B cell (primary cell): ENCODE measurements at regions of chr5 and their contacts with region 1.

Region 1: GRCh38 chr5:65925601-65926275 is 637 bp upstream of the ERBIN start:
- DNase-seq: peak; percentile 94
- ATAC-seq: peak; percentile 74
- H3K4me3 ChIP-seq: peak overlapping the region; percentile 30 to 96 (median 93)
- H3K4me3 Mint-ChIP-seq: peak overlapping the region; percentile 94
- H3K27ac ChIP-seq: peak overlapping the region; percentile 94 to 98
- H3K27ac Mint-ChIP-seq: peak overlapping the region; percentile 99
- H3K4me1 ChIP-seq: peaks cover 16 to 28% of the 10 kb centered on the region in 2 donors
- H3K4me1 Mint-ChIP-seq: peaks cover 44% of the 10 kb centered on the region
- H3K27me3 ChIP-seq: no peaks in the 10 kb centered on the region
- H3K27me3 Mint-ChIP-seq: no peaks in the 10 kb centered on the region
- CTCF ChIP-seq: peak; percentile 29

Region 2: GRCh38 chr5:65562731-65563701 is 362.7 kb before region 1 on chr5 and contains the starts of genes CENPK and PPWD1:
- CTCF ChIA-PET with region 1: no interaction called
- POLR2A ChIA-PET with region 1: interaction called, 4 read pairs
- intact Hi-C with region 1: loop called (anchors 1 kb)
- DNase-seq: peak; percentile 95
- ATAC-seq: peak; percentile 99
- H3K4me3 ChIP-seq: peak within 1 kb of the TSS; percentile 74 to 97 (median 91)
- H3K4me3 Mint-ChIP-seq: peak within 1 kb of the TSS; percentile 93
- H3K27ac ChIP-seq: peak within 1 kb of the TSS; percentile 89 to 90
- H3K27ac Mint-ChIP-seq: peak within 1 kb of the TSS; percentile 95
- H3K4me1 ChIP-seq: peaks cover 19 to 20% of the 10 kb centered on the region in 2 donors
- H3K4me1 Mint-ChIP-seq: peaks cover 38% of the 10 kb centered on the region
- H3K27me3 ChIP-seq: no peaks in the 10 kb centered on the region
- H3K27me3 Mint-ChIP-seq: no peaks in the 10 kb centered on the region
- CTCF ChIP-seq: no peak
- total RNA-seq, gene CENPK: 18.4 and 21.0 TPM in 2 replicates
- total RNA-seq, gene PPWD1: 89.4 and 91.0 TPM in 2 replicates

Region 3: GRCh38 chr5:65938256-65938655 is 12.5 kb after region 1 on chr5:
- CTCF ChIA-PET with region 1: interaction called, 3 read pairs
- POLR2A ChIA-PET with region 1: interaction called, 4 read pairs
- intact Hi-C with region 1: loop called (anchors 2 kb)
- DNase-seq: peak; percentile 57
- ATAC-seq: peak; percentile 83
- H3K4me3 ChIP-seq: no peak overlapping the region
- H3K4me3 Mint-ChIP-seq: peak overlapping the region; percentile 44
- H3K27ac ChIP-seq: peak overlapping the region in 1 of 2 donors; percentile 34
- H3K27ac Mint-ChIP-seq: peak overlapping the region; percentile 21
- H3K4me1 ChIP-seq: peaks cover 24 to 37% of the 10 kb centered on the region in 2 donors
- H3K4me1 Mint-ChIP-seq: peaks cover 60% of the 10 kb centered on the region
- H3K27me3 ChIP-seq: no peaks in the 10 kb centered on the region
- H3K27me3 Mint-ChIP-seq: no peaks in the 10 kb centered on the region
- CTCF ChIP-seq: no peak

Region 4: GRCh38 chr5:66010476-66010875 is 84.7 kb after region 1 on chr5:
- CTCF ChIA-PET with region 1: no interaction called
- POLR2A ChIA-PET with region 1: no interaction called
- intact Hi-C with region 1: loop called (anchors 5 kb)
- DNase-seq: peak; percentile 61
- ATAC-seq: peak; percentile 71
- H3K4me3 ChIP-seq: no peak overlapping the region
- H3K4me3 Mint-ChIP-seq: peak overlapping the region; percentile 71
- H3K27ac ChIP-seq: peak overlapping the region; percentile 1 to 66
- H3K27ac Mint-ChIP-seq: peak overlapping the region; percentile 91
- H3K4me1 ChIP-seq: peaks cover 15 to 28% of the 10 kb centered on the region in 2 donors
- H3K4me1 Mint-ChIP-seq: peaks cover 44% of the 10 kb centered on the region
- H3K27me3 ChIP-seq: no peaks in the 10 kb centered on the region
- H3K27me3 Mint-ChIP-seq: no peaks in the 10 kb centered on the region
- CTCF ChIP-seq: no peak

Region 5: GRCh38 chr5:66553916-66554575 is 628.3 kb after region 1 on chr5:
- CTCF ChIA-PET with region 1: no interaction called
- POLR2A ChIA-PET with region 1: no interaction called
- intact Hi-C with region 1: loop called (anchors 5 kb)
- DNase-seq: peak; percentile 93
- ATAC-seq: peak; percentile 94
- H3K4me3 ChIP-seq: peak overlapping the region in 1 of 5 experiments; percentile 1
- H3K4me3 Mint-ChIP-seq: peak overlapping the region; percentile 65
- H3K27ac ChIP-seq: peak overlapping the region; percentile 69 to 75
- H3K27ac Mint-ChIP-seq: peak overlapping the region; percentile 93
- H3K4me1 ChIP-seq: peaks cover 28 to 34% of the 10 kb centered on the region in 2 donors
- H3K4me1 Mint-ChIP-seq: peaks cover 39% of the 10 kb centered on the region
- H3K27me3 ChIP-seq: peaks cover 0 to 2% (median 0%) of the 10 kb centered on the region in 4 experiments
- H3K27me3 Mint-ChIP-seq: no peaks in the 10 kb centered on the region
- CTCF ChIP-seq: no peak